Gastrocnemius medialis (tissue), 4 donors: ENCODE measurements at regions of chr16 and their contacts with region 1.

Region 1: DNA sequence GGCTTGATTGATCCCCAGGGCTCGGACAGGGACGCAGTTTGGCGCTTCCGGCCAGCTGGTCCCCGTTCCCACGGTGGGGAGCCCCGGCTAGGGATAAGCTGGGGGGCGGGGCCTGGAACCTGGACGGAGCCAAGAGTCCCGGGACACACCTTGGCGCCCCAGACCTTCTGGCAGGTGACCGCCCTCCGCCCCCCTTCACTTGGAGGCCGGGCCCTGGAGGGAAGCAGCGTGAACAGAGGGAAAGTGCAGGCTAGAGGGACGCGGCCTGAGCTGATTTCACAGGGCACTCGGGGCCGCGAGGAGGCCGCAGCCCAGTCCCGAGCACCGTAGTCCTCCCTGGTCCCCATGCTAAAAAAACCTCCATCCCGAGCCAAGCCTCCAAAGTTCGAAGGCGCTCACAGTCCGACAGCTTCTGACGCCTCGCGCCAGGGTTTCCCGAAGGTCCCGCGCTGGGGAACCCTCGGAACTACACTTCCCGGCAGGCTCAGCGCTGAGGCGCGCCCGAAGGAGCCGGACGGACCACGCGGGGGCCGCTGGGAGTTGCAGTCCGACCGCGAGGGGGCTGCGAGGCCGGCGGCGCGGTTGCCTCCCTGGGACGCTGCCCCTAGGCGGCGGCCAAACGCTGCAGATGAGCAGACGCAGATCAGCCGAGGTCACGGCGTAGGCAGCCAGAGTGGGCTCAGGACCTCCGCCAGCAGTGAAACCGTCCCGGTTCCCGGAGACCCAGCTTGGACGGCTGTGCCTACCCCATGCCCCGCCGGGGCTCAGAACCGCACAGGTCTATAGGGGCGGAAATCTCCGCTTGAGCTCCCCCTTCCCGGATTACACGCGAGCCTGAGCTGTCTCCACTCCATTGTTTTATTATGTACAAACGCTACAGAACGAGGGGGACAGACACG is at the start of gene TBX6:
- DNase-seq: peak; percentile 88 to 90
- ATAC-seq: peak; percentile 76 to 78
- H3K4me3 ChIP-seq: peak within 1 kb of the TSS; percentile 45 to 83 (median 69)
- H3K27ac ChIP-seq: peak within 1 kb of the TSS; percentile 89 to 99 (median 96)
- H3K4me1 ChIP-seq: peaks cover 39 to 44% of the 10 kb centered on the region in 2 donors
- H3K27me3 ChIP-seq: no peaks in the 10 kb centered on the region
- CTCF ChIP-seq: peak; percentile 80 to 89 (median 87)
- POLR2A ChIP-seq: peak; percentile 4 to 20
- total RNA-seq, gene TBX6: 0.29 to 0.92 (median 0.67) TPM

Region 2: GRCh38 chr16:30041846-30042267 is 49.9 kb before region 1 on chr16:
- in situ Hi-C with region 1: no loop called
- intact Hi-C with region 1: loop called (anchors 2 kb)
- DNase-seq: no peak
- ATAC-seq: no peak
- H3K4me3 ChIP-seq: no peak overlapping the region
- H3K27ac ChIP-seq: no peak overlapping the region
- H3K4me1 ChIP-seq: no peaks in the 10 kb centered on the region
- H3K27me3 ChIP-seq: no peaks in the 10 kb centered on the region
- CTCF ChIP-seq: peak in 3 of 5 experiments; percentile 34 to 65 (median 48)
- POLR2A ChIP-seq: no peak

Region 3: DNA sequence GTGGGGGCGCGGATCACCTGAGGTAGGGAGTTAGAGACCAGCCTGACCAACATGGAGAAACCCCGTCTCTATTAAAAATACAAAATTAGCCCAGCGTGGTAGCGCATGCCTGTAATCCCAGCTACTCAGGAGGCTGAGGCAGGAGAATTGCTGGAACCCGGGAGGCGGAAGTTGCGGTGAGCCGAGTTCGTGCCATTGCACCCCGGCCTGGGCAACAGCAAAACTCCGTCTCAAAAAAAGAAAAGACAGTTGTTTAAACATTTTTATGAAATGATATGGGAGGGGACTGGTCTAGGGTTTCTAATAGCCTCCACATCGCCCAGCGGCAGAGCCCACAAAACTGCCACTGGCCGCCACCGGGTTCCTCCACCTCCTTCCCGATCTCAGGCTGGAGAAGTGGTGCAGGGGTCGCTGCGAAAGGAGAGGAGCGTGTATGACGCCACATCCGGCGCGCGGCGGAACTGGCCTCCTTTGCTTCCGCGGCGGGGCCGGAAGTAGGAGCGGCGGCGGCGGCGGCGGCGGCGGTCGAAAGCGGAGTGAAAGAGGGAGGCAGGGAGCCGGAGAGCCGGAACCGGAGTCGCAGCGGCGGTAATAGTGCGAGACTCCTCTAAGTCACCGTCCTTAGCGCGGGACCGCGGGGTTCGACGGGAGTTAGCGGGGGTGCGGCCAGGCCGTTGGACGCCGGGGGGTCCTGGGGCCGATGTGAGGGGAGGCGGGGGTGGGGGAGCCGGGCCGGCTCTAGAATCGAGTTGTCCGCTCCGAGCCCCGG is 16.0 kb before region 1 on chr16 and contains the start of gene PPP4C:
- in situ Hi-C with region 1: no loop called
- intact Hi-C with region 1: no loop called
- DNase-seq: peak; percentile 84 to 89
- ATAC-seq: peak; percentile 85 to 86
- H3K4me3 ChIP-seq: peak within 1 kb of the TSS; percentile 80 to 99 (median 89)
- H3K27ac ChIP-seq: peak within 1 kb of the TSS; percentile 89 to 97 (median 90)
- H3K4me1 ChIP-seq: peaks cover 16 to 19% of the 10 kb centered on the region in 2 donors
- H3K27me3 ChIP-seq: no peaks in the 10 kb centered on the region
- CTCF ChIP-seq: peak in 2 of 5 experiments; percentile 11 to 16
- POLR2A ChIP-seq: peak; percentile 82 to 85
- total RNA-seq, gene PPP4C: 23.8 to 64.3 (median 44.7) TPM

Region 4: DNA sequence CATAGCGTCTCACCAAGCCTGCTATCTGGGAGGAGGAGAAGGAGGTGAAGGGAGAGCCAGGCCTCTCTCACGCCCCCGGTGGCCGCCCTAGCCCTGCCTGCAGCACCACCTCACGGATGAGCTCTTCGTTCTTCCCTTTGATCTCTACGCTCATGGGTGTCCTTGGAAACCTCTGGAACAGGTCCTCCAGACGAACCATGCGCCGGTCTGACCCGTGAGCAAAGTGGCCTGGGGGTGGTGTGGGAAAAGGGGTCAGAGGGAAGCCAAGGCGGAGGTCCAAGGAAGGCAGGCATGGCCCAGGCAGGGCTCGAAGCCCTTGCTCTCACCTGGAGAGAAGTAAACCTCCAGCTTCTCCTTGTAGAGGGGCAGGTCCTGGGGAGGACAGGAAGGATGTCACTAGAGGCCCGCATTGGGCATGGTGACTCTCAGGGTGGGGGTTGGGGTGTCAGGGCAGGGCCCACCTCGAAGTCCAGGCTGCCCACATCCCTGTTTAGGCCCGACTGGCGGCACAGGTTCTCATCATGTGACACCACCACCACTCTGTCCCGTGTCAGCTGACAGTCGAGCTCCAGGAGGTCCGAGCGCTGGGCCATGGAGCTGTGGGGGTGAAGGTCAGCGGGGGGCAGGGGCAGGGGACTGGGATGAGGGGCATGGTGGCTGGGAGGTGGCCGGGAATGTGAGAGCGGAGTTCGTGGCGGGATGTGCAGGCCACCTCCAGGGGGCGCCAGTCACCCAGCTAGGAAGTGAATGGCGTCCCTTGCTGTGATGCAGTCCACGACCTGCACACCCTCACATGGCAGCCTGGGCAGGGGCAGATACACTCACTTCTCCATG is 20.7 kb after region 1 on chr16:
- in situ Hi-C with region 1: no loop called
- intact Hi-C with region 1: no loop called
- DNase-seq: peak in 1 of 2 donors; percentile 32
- ATAC-seq: no peak
- H3K4me3 ChIP-seq: no peak overlapping the region
- H3K27ac ChIP-seq: no peak overlapping the region
- H3K4me1 ChIP-seq: no peaks in the 10 kb centered on the region
- H3K27me3 ChIP-seq: no peaks in the 10 kb centered on the region
- CTCF ChIP-seq: peak in 4 of 5 experiments; percentile 53 to 62 (median 58)
- POLR2A ChIP-seq: no peak

Region 5: GRCh38 chr16:30122604-30123160 is 31.0 kb after region 1 on chr16:
- in situ Hi-C with region 1: no loop called
- intact Hi-C with region 1: loop called (anchors 1 kb)
- DNase-seq: no peak
- ATAC-seq: no peak
- H3K4me3 ChIP-seq: peak overlapping the region; percentile 79 to 92 (median 86)
- H3K27ac ChIP-seq: peak overlapping the region; percentile 85 to 96 (median 87)
- H3K4me1 ChIP-seq: peaks cover 14 to 18% of the 10 kb centered on the region in 2 donors
- H3K27me3 ChIP-seq: no peaks in the 10 kb centered on the region
- CTCF ChIP-seq: no peak
- POLR2A ChIP-seq: no peak